AG04449 (cell line): ENCODE measurements at regions of chr5 and their contacts with region 1.

Region 1: DNA sequence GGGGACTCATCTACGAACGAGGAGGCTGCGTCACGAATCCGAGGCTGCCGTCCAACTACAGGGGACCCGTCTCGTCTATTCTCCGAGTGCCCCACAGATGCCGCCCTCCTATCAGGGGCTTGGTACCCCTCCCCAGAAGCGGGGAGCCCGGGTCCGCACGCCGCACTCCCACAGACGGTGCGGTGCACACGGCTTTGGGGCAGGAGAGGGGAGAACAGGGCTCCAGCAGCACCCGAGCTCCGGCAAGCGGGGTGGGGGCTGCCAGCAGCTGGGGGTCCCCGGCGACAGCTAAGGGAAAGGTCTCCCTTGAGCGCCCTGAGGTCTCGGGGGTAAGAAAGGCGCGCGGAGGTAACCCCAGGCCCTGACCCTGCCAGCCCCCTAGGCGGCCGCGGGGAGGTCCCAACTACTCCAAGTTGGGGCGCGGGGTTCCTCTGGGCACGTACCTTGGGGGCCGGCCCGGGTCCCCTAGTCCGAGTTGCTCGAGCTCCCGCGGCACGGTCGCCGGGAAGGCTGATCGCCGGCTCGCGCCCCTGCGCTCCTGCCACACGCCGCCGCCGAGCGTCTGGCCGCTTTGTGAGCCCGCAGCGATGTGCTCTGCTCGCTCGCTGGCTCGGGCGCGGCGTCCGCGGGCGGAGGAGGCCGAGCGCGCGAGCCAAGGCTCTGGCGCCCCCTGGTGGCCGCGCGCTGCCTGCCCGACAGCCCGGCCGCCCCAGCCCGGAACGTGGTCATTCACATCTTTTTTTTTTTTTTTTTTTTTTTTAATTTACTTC is at the start of gene SPOCK1:
- DNase-seq: no peak
- H3K4me3 ChIP-seq: peak within 1 kb of the TSS; percentile 81
- CTCF ChIP-seq: peak; percentile 58

Region 2: DNA sequence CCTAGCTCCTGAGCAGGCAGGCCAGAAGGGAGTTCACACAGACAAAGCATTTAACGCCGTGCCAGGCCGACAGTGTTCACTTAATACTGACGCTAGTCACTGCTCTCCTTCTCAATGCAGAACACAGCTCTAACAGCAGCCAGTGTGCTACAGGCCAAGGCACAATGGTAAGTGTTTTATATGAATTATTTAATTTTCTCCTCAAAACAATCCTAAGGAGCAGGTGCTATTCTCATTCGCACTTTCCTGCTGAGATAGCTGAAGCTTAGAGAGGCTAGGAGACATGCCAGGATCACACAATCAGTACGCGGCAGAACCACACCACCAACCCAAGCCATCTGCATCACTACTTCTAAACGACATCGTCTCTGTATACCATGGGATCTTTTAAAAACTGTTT is 170.5 kb before region 1 on chr5:
- CTCF ChIA-PET with region 1: interaction called, 19 read pairs
- POLR2A ChIA-PET with region 1: no interaction called
- DNase-seq: no peak
- H3K4me3 ChIP-seq: no peak overlapping the region
- CTCF ChIP-seq: no peak